ENCODE measurements at regions of chr11 and their contacts with region 1.

Region 1: GRCh38 chr11:96228473-96228891 is 114.5 kb downstream of the MAML2 start:
- DNase-seq: no peak
- ATAC-seq: no peak
- H3K4me3 ChIP-seq: no peak overlapping the region
- H3K4me3 Mint-ChIP-seq: peak overlapping the region; percentile 14
- H3K27ac ChIP-seq: no peak overlapping the region
- H3K27ac Mint-ChIP-seq: peak overlapping the region; percentile 86
- H3K4me1 ChIP-seq: peaks cover 18% of the 10 kb centered on the region
- H3K4me1 Mint-ChIP-seq: peaks cover 89% of the 10 kb centered on the region
- H3K27me3 ChIP-seq: no peaks in the 10 kb centered on the region
- H3K27me3 Mint-ChIP-seq: no peaks in the 10 kb centered on the region
- CTCF ChIP-seq: no peak

Region 2: GRCh38 chr11:96054870-96055705 is 173.4 kb before region 1 on chr11:
- CTCF ChIA-PET with region 1: no interaction called
- POLR2A ChIA-PET with region 1: no interaction called
- intact Hi-C with region 1: loop called in 1 of 2 experiments (anchors 5 kb)
- DNase-seq: peak in 3 of 14 experiments; percentile 55 to 57 (median 57)
- ATAC-seq: peak; percentile 76
- H3K4me3 ChIP-seq: no peak overlapping the region
- H3K4me3 Mint-ChIP-seq: no peak overlapping the region
- H3K27ac ChIP-seq: no peak overlapping the region
- H3K27ac Mint-ChIP-seq: peak overlapping the region; percentile 26
- H3K4me1 ChIP-seq: peaks cover 2% of the 10 kb centered on the region
- H3K4me1 Mint-ChIP-seq: peaks cover 83% of the 10 kb centered on the region
- H3K27me3 ChIP-seq: no peaks in the 10 kb centered on the region
- H3K27me3 Mint-ChIP-seq: no peaks in the 10 kb centered on the region
- CTCF ChIP-seq: peak; percentile 65

Region 3: DNA sequence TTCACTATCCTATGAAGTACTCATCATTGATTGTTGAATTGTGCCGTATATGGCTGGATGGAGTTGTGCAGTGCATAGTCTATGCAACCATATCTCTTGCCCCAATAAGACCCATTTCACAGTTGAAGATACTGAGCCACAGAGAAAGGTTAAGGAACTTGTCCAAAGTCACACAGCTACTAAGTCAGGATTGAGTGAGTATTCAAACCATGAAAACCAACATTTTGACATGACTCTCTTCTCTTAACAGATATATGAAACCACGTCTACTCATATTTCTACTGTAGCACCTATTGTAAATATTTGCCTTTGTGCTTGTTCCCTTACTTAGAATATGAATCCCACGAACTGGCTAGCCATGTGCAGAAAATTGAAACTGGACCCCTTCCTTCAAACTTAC is 56.4 kb after region 1 on chr11:
- CTCF ChIA-PET with region 1: no interaction called
- POLR2A ChIA-PET with region 1: no interaction called
- intact Hi-C with region 1: loop called in 1 of 2 experiments (anchors 5 kb)
- DNase-seq: no peak
- ATAC-seq: no peak
- H3K4me3 ChIP-seq: no peak overlapping the region
- H3K4me3 Mint-ChIP-seq: no peak overlapping the region
- H3K27ac ChIP-seq: no peak overlapping the region
- H3K27ac Mint-ChIP-seq: no peak overlapping the region
- H3K4me1 ChIP-seq: peaks cover 11% of the 10 kb centered on the region
- H3K4me1 Mint-ChIP-seq: peaks cover 88% of the 10 kb centered on the region
- H3K27me3 ChIP-seq: no peaks in the 10 kb centered on the region
- H3K27me3 Mint-ChIP-seq: no peaks in the 10 kb centered on the region
- CTCF ChIP-seq: no peak

Region 4: GRCh38 chr11:96331699-96332116 is 103.2 kb after region 1 on chr11:
- CTCF ChIA-PET with region 1: no interaction called
- POLR2A ChIA-PET with region 1: no interaction called
- intact Hi-C with region 1: no loop called
- DNase-seq: no peak
- ATAC-seq: no peak
- H3K4me3 ChIP-seq: no peak overlapping the region
- H3K4me3 Mint-ChIP-seq: peak overlapping the region; percentile 49
- H3K27ac ChIP-seq: no peak overlapping the region
- H3K27ac Mint-ChIP-seq: peak overlapping the region; percentile 58
- H3K4me1 ChIP-seq: peaks cover 21% of the 10 kb centered on the region
- H3K4me1 Mint-ChIP-seq: peaks cover 85% of the 10 kb centered on the region
- H3K27me3 ChIP-seq: no peaks in the 10 kb centered on the region
- H3K27me3 Mint-ChIP-seq: no peaks in the 10 kb centered on the region
- CTCF ChIP-seq: no peak

Region 5: DNA sequence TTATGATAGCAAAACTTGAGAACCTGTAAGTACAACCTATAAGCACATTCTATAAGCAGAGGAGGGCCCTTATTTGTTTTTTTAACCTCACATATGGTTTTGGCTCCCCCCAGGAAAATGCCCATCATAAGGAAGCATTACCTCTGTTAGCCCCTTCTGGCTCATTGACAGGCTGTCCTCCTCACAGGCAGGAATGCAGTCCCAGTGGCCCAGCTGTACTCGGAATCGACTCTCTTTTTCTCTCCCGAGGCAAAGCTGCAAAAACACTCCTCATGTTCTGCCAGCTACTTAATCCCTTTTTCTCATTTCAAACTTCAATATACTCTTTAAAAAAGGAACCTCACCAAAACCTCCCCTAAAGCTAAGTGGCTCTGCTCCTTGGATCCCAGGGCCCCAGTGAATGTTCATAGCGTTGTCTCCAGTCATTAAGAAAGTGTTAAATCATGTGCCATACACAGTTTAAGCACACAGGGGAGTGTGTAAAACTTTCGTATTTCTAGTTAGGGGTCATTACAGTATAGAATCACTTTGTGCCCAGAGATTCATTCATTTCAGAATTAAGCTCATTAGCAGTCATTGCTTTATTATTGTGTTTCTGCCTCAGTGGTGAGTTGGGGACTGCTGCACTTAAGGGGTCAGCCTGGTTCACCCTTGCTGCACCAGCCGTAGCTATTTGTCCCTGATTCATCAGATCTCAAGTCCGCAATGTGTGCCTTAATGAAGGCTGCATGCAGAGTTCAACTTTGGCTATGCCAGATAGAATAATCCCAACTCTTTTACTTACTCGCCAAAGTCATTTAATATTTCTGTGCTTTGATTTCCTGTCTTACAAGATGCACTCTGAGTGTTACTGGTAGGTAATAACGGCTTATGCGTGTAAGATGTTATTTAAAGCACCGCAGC is 219.0 kb after region 1 on chr11:
- CTCF ChIA-PET with region 1: no interaction called
- POLR2A ChIA-PET with region 1: no interaction called
- intact Hi-C with region 1: no loop called
- DNase-seq: no peak
- ATAC-seq: no peak
- H3K4me3 ChIP-seq: no peak overlapping the region
- H3K4me3 Mint-ChIP-seq: no peak overlapping the region
- H3K27ac ChIP-seq: no peak overlapping the region
- H3K27ac Mint-ChIP-seq: no peak overlapping the region
- H3K4me1 ChIP-seq: no peaks in the 10 kb centered on the region
- H3K4me1 Mint-ChIP-seq: no peaks in the 10 kb centered on the region
- H3K27me3 ChIP-seq: peaks cover 6 to 7% of the 10 kb centered on the region in 2 experiments
- H3K27me3 Mint-ChIP-seq: peaks cover 34% of the 10 kb centered on the region
- CTCF ChIP-seq: no peak